ENCODE measurements at regions of chr5 and their contacts with region 1.

Region 1: GRCh38 chr5:158074992-158075769 is 216.2 kb upstream of the CLINT1 start:
- DNase-seq: peak; percentile 17 to 69
- H3K4me3 ChIP-seq: no peak overlapping the region
- H3K27ac ChIP-seq: 0 out of 2 replicates have a peak overlapping the region, but pooled peaks have one; percentile 20
- H3K4me1 ChIP-seq: peaks cover 0 to 3% (median 3%) of the 10 kb centered on the region in 4 experiments; a peak in 3 of 7 replicates
- H3K27me3 ChIP-seq: no peaks in the 10 kb centered on the region
- CTCF ChIP-seq: peak; percentile 67 to 81 (median 72)
- EP300 ChIP-seq: peak in 1 of 2 experiments; percentile 54; a peak in 1 of 3 replicates
- POLR2A ChIP-seq: no peak
- RAD21 ChIP-seq: peak; percentile 82 to 83

Region 2: GRCh38 chr5:157930710-157931109 is 144.5 kb before region 1 on chr5:
- CTCF ChIA-PET with region 1: no interaction called
- POLR2A ChIA-PET with region 1: no interaction called
- DNase-seq: no peak
- H3K4me3 ChIP-seq: no peak overlapping the region
- H3K27ac ChIP-seq: no peak overlapping the region
- H3K4me1 ChIP-seq: peaks cover 2 to 10% (median 7%) of the 10 kb centered on the region in 4 experiments; a peak in 5 of 7 replicates
- H3K27me3 ChIP-seq: no peaks in the 10 kb centered on the region
- CTCF ChIP-seq: no peak
- EP300 ChIP-seq: no peak
- POLR2A ChIP-seq: no peak
- RAD21 ChIP-seq: no peak

Region 3: GRCh38 chr5:158051036-158051435 is 24.1 kb before region 1 on chr5:
- CTCF ChIA-PET with region 1: interaction called, 11 read pairs
- POLR2A ChIA-PET with region 1: no interaction called
- DNase-seq: no peak
- H3K4me3 ChIP-seq: no peak overlapping the region
- H3K27ac ChIP-seq: no peak overlapping the region
- H3K4me1 ChIP-seq: no peaks in the 10 kb centered on the region
- H3K27me3 ChIP-seq: no peaks in the 10 kb centered on the region
- CTCF ChIP-seq: no peak
- EP300 ChIP-seq: no peak
- POLR2A ChIP-seq: no peak
- RAD21 ChIP-seq: no peak

Region 4: GRCh38 chr5:158096835-158097234 is 21.7 kb after region 1 on chr5:
- CTCF ChIA-PET with region 1: interaction called, 10 read pairs
- POLR2A ChIA-PET with region 1: no interaction called
- DNase-seq: no peak
- H3K4me3 ChIP-seq: no peak overlapping the region
- H3K27ac ChIP-seq: no peak overlapping the region
- H3K4me1 ChIP-seq: no peaks in the 10 kb centered on the region
- H3K27me3 ChIP-seq: no peaks in the 10 kb centered on the region
- CTCF ChIP-seq: no peak
- EP300 ChIP-seq: no peak
- POLR2A ChIP-seq: no peak
- RAD21 ChIP-seq: no peak

Region 5: DNA sequence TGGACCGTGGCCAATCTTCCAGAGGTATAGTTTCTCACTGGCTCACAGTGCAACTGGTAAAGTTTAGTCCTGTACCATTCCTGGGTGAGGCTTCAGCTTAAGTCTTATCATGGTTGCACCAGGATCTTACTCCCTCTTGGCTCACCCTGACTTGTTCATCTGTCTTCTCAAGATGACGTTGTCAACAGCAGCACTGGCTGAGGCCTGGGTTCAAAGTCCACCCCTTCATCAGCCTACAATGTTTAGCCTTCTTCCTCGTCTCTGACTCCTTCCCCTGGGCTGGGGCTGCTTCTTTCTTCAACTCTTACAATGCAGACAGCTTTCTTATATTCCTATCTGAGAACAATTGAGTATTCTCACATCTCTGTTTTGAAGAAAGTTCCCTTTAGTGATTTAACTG is 94.9 kb after region 1 on chr5:
- CTCF ChIA-PET with region 1: interaction called, 15 read pairs
- POLR2A ChIA-PET with region 1: no interaction called
- DNase-seq: no peak
- H3K4me3 ChIP-seq: no peak overlapping the region
- H3K27ac ChIP-seq: no peak overlapping the region
- H3K4me1 ChIP-seq: peaks cover 0 to under 1% (median 0%) of the 10 kb centered on the region in 4 experiments; a peak in 1 of 7 replicates
- H3K27me3 ChIP-seq: peaks cover 0 to 2% (median 0%) of the 10 kb centered on the region in 4 experiments; a peak in 1 of 7 replicates
- CTCF ChIP-seq: no peak
- EP300 ChIP-seq: no peak
- POLR2A ChIP-seq: no peak
- RAD21 ChIP-seq: no peak

Region 6: GRCh38 chr5:159106569-159107282 is 1031.5 kb after region 1 on chr5:
- CTCF ChIA-PET with region 1: interaction called, 11 read pairs
- POLR2A ChIA-PET with region 1: no interaction called
- DNase-seq: peak in 1 of 2 experiments; percentile 91
- H3K4me3 ChIP-seq: peak overlapping the region in 2 of 4 experiments; percentile 16 to 57; a peak in 5 of 8 replicates
- H3K27ac ChIP-seq: no peak overlapping the region
- H3K4me1 ChIP-seq: peaks cover 8 to 19% (median 13%) of the 10 kb centered on the region in 4 experiments; a peak in 6 of 7 replicates
- H3K27me3 ChIP-seq: peaks cover 48 to 53% (median 52%) of the 10 kb centered on the region in 4 experiments
- CTCF ChIP-seq: peak; percentile 88 to 93 (median 90)
- EP300 ChIP-seq: no peak
- POLR2A ChIP-seq: no peak
- RAD21 ChIP-seq: peak; percentile 95 to 98